CD8-positive, alpha-beta T cell (primary cell): ENCODE measurements at regions of chr17 and their contacts with region 1.

Region 1: DNA sequence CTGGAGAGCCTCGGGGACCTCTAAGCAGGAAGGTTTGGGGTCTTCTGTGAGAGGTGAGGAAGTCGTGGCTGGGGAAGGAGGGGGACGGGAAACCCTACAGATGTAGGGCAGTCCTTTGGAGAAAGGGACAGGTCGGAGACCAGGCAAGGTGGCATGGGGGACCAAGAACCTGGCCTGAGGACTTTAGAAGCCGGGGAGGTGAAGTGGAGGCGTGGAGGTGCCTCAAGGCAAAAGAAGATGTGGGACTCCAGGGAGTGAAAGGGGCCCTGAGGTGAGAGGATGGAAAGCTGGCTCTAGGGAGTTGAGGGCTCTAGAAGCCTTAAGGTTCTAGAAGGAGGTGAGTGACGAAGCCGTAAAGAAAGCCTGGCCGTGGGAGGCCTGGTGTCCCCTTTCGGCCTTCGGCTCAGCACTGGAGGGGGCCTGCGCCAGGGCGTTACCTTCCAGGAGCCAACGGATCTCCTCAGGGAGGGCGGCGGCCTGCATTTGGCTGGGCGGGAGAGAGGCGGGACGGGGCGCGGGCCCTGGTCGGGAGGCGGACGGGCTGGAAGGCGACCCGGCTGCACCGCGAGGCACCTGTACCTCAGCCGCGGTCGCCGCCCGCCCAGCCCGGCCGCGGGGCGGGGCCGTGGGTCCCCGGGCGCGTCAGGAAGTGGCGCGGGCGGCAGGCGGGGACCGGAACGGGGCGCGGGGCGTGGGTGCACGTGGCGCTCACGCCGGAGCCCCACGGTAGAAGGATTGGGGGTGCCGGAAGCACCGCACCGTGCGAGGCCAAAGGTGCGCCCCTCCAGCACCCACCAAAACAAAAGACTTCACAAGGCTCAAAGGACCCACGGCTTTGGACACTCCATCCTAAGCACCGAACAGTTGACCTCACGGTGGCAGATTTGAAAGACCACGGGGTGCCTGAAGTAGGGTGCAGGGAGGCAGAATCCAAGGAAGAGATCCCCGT is at the start of gene SKAP1:
- DNase-seq: peak; percentile 33 to 84 (median 66)
- ATAC-seq: peak; percentile 68
- H3K4me3 ChIP-seq: peak within 1 kb of the TSS; percentile 88 to 93
- H3K4me3 Mint-ChIP-seq: peak within 1 kb of the TSS; percentile 99
- H3K27ac ChIP-seq: peak within 1 kb of the TSS; percentile 79 to 91
- H3K27ac Mint-ChIP-seq: peak within 1 kb of the TSS; percentile 99
- H3K4me1 ChIP-seq: peaks cover 63% of the 10 kb centered on the region
- H3K4me1 Mint-ChIP-seq: peaks cover 88% of the 10 kb centered on the region
- H3K27me3 ChIP-seq: no peaks in the 10 kb centered on the region
- H3K27me3 Mint-ChIP-seq: no peaks in the 10 kb centered on the region
- CTCF ChIP-seq: no peak
- total RNA-seq, gene SKAP1: 59.9 to 62.4 TPM

Region 2: GRCh38 chr17:48413613-48414405 is 16.1 kb before region 1 on chr17:
- CTCF ChIA-PET with region 1: interaction called, 4 read pairs
- POLR2A ChIA-PET with region 1: interaction called, 9 read pairs
- intact Hi-C with region 1: loop called in 1 of 2 experiments (anchors 1 kb)
- DNase-seq: peak in 2 of 9 experiments; percentile 26 to 56
- ATAC-seq: peak; percentile 63
- H3K4me3 ChIP-seq: no peak overlapping the region
- H3K4me3 Mint-ChIP-seq: peak overlapping the region; percentile 54
- H3K27ac ChIP-seq: peak overlapping the region; percentile 0 to 50
- H3K27ac Mint-ChIP-seq: peak overlapping the region; percentile 93
- H3K4me1 ChIP-seq: peaks cover 78% of the 10 kb centered on the region
- H3K4me1 Mint-ChIP-seq: peaks cover 83% of the 10 kb centered on the region
- H3K27me3 ChIP-seq: no peaks in the 10 kb centered on the region
- H3K27me3 Mint-ChIP-seq: no peaks in the 10 kb centered on the region
- CTCF ChIP-seq: no peak

Region 3: GRCh38 chr17:48441231-48441711 is 11.4 kb after region 1 on chr17:
- CTCF ChIA-PET with region 1: interaction called, 11 read pairs
- POLR2A ChIA-PET with region 1: interaction called, 10 read pairs
- intact Hi-C with region 1: loop called (anchors 1 kb)
- DNase-seq: peak in 5 of 9 experiments; percentile 35 to 92 (median 50)
- ATAC-seq: peak; percentile 67
- H3K4me3 ChIP-seq: peak overlapping the region; percentile 0 to 32
- H3K4me3 Mint-ChIP-seq: peak overlapping the region; percentile 68
- H3K27ac ChIP-seq: peak overlapping the region; percentile 58 to 85
- H3K27ac Mint-ChIP-seq: peak overlapping the region; percentile 97
- H3K4me1 ChIP-seq: peaks cover 94% of the 10 kb centered on the region
- H3K4me1 Mint-ChIP-seq: peaks cover 94% of the 10 kb centered on the region
- H3K27me3 ChIP-seq: no peaks in the 10 kb centered on the region
- H3K27me3 Mint-ChIP-seq: no peaks in the 10 kb centered on the region
- CTCF ChIP-seq: no peak